Caco-2 (cell line): ENCODE measurements at regions of chr14 and their contacts with region 1.

Region 1: DNA sequence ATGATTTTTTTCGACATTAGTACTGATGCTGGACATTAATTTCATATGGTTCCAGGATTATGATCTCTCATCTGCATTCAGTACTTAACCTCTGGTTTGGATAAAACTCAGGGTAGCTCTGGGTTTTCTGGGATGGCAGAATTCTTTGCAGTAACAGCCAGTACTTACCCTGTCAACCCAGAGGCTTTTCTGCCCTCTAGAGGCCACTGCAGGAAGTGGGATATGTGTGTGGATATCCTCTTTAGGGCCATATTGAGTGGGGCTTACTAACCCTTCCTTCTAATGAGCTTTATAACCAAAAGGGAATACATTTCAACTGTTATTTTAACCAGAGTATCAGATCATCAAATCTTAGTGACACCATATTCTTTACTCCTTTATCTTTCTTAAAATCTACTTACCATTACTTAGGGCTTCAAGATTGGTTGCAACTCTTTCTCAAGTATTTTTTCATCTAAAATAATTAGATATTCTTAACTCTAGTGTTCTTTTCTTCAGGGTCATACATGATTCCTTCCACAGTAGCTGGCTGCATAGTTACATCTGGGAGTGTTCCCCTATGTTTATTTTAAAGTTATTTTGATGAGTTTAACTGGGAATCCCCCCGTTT is 488.0 kb upstream of the STXBP6 start:
- DNase-seq: peak; percentile 57 to 71
- H3K4me3 ChIP-seq: no peak overlapping the region
- H3K4me3 Mint-ChIP-seq: no peak overlapping the region
- H3K27ac Mint-ChIP-seq: no peak overlapping the region
- H3K4me1 ChIP-seq: no peaks in the 10 kb centered on the region
- H3K4me1 Mint-ChIP-seq: no peaks in the 10 kb centered on the region
- H3K27me3 ChIP-seq: no peaks in the 10 kb centered on the region; the same call in 1 of the 2 replicates
- H3K27me3 Mint-ChIP-seq: peaks cover 11% of the 10 kb centered on the region
- CTCF ChIP-seq: peak; percentile 63 to 87

Region 2: GRCh38 chr14:25411781-25412757 is 125.9 kb before region 1 on chr14:
- CTCF ChIA-PET with region 1: interaction called, 7 read pairs
- POLR2A ChIA-PET with region 1: no interaction called
- intact Hi-C with region 1: loop called (anchors 5 kb)
- DNase-seq: peak in 1 of 2 experiments; percentile 11
- H3K4me3 ChIP-seq: no peak overlapping the region
- H3K4me3 Mint-ChIP-seq: no peak overlapping the region
- H3K27ac Mint-ChIP-seq: no peak overlapping the region
- H3K4me1 ChIP-seq: no peaks in the 10 kb centered on the region
- H3K4me1 Mint-ChIP-seq: no peaks in the 10 kb centered on the region
- H3K27me3 ChIP-seq: no peaks in the 10 kb centered on the region
- H3K27me3 Mint-ChIP-seq: peaks cover 12% of the 10 kb centered on the region
- CTCF ChIP-seq: peak in 1 of 2 experiments; percentile 42

Region 3: DNA sequence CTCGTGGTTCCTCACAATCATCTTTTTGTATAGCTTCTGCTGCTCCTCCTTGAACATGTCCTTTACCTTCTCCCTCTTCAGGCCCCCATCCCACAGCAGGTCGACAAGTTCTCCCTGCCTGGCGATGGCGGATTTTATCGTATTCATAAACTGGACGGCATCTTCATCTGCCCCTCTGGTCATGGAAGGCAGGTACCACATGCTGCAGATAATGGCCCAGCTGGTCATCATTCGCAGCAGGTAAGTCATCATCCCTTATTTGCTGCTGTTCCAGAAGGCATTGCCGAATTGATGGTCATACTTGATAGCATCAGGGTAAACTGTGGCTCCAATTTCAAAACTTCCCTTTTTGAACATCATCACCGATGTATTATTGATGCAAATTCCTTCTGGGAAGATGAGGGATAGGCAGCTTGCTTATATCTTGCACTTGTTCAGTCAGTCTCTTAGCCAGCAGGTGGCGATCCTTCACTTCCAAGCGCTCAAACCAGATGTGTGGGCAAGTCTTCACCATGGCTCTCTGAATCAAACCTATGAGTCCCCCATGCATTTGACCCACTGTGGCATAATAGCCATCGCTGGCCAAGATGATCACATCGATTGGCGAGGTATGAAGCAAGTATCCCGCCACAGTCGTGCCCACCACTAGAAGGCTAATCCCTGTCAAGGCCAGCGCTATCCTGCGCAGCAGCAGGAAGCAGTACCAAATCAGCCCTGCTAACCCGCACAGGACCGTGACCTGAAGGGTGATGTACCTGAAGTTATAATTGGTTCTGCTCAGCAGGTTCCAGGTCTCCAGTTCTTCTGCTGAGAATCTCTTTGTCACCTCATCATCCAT is 106.5 kb before region 1 on chr14:
- CTCF ChIA-PET with region 1: interaction called, 14 read pairs
- POLR2A ChIA-PET with region 1: no interaction called
- intact Hi-C with region 1: loop called (anchors 1 kb)
- DNase-seq: peak; percentile 45 to 52
- H3K4me3 ChIP-seq: no peak overlapping the region
- H3K4me3 Mint-ChIP-seq: no peak overlapping the region
- H3K27ac Mint-ChIP-seq: no peak overlapping the region
- H3K4me1 ChIP-seq: no peaks in the 10 kb centered on the region
- H3K4me1 Mint-ChIP-seq: no peaks in the 10 kb centered on the region
- H3K27me3 ChIP-seq: no peaks in the 10 kb centered on the region
- H3K27me3 Mint-ChIP-seq: peaks cover 7% of the 10 kb centered on the region
- CTCF ChIP-seq: peak; percentile 39 to 47